ENCODE measurements at regions of chr6 and their contacts with region 1.

Region 1: DNA sequence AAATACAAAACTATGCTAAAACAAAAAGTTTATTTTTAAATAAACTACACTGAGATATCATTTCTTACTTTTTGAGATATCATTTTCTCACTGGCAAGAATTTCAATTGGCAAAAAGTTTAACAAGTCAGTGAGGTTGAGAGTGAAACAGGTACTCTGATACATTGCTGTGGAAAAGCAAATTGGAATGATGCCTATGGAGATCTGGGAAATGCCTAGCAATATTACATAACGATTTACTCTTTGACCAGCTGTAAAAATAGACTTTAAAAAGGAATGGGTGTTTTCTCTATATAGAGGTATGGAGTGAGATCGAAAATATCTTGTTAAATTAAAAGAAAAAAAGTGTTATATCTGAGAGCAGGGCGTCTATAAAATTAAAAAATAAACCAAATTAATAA is 16.9 kb downstream of the CGAS start:
- DNase-seq: no peak
- H3K4me3 ChIP-seq: no peak overlapping the region
- H3K27ac ChIP-seq: no peak overlapping the region
- H3K4me1 ChIP-seq: no peaks in the 10 kb centered on the region
- H3K27me3 ChIP-seq: no peaks in the 10 kb centered on the region
- CTCF ChIP-seq: no peak
- POLR2A ChIP-seq: no peak

Region 2: GRCh38 chr6:72876256-72876655 is 559.0 kb before region 1 on chr6:
- intact Hi-C with region 1: loop called (anchors 5 kb)
- DNase-seq: no peak
- H3K4me3 ChIP-seq: no peak overlapping the region
- H3K27ac ChIP-seq: no peak overlapping the region
- H3K4me1 ChIP-seq: no peaks in the 10 kb centered on the region
- H3K27me3 ChIP-seq: no peaks in the 10 kb centered on the region
- CTCF ChIP-seq: no peak
- POLR2A ChIP-seq: no peak

Region 3: GRCh38 chr6:73418081-73418741 is 17.0 kb before region 1 on chr6:
- intact Hi-C with region 1: loop called (anchors 1 kb)
- DNase-seq: no peak
- H3K4me3 ChIP-seq: no peak overlapping the region
- H3K27ac ChIP-seq: no peak overlapping the region
- H3K4me1 ChIP-seq: no peaks in the 10 kb centered on the region
- H3K27me3 ChIP-seq: no peaks in the 10 kb centered on the region
- CTCF ChIP-seq: no peak
- POLR2A ChIP-seq: no peak

Region 4: DNA sequence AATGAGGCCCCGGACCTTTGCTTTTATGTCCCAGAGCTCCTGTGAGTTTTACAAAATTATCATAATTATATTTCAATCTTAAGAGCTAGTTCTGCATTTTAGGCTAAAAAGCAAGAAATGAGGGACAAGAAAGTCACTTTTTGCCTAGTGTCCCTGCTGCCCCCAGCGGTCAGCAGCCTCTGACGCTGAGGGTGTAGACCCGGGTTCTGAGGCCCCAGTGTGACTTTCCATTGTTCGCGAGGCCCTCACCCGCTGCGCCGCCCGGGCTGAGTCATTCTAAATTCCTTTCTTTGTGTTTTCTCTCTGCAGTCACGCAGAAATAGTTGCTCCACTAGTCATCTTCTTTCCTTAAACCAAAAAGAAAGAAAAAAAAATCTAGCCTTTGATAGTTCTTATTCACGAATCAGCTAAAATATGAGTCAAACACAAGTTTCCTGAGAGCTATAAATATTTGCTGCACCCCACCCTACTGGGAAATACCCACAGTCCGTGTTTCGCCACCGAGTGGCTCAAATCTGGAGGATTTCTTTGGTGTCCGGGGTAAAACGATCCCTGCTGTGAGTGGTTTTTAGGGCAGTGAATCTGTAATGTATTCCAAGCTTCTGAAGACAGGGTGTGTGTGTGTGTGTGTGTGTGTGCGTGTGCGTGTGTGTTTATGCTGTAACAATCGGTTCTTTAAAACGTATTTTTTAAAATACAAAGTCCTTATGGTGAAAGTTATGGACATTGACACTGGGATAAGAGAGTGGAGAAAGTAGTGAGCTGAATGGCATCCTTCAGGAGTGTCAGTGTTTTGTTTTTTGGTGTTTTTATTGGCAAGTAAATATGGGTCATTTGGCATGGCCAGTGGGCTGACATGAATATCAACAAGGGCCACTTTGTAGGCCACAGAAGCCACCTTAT is 145.3 kb after region 1 on chr6:
- intact Hi-C with region 1: no loop called
- DNase-seq: peak; percentile 80 to 83
- H3K4me3 ChIP-seq: peak overlapping the region; percentile 9 to 50 (median 33)
- H3K27ac ChIP-seq: peak overlapping the region; percentile 91 to 95
- H3K4me1 ChIP-seq: peaks cover 6 to 7% of the 10 kb centered on the region in 2 donors
- H3K27me3 ChIP-seq: no peaks in the 10 kb centered on the region
- CTCF ChIP-seq: peak in 2 of 3 donors; percentile 32 to 59
- POLR2A ChIP-seq: no peak